Sciatic nerve (tissue), 2 donors: ENCODE measurements at regions of chr7 and their contacts with region 1.

Region 1: DNA sequence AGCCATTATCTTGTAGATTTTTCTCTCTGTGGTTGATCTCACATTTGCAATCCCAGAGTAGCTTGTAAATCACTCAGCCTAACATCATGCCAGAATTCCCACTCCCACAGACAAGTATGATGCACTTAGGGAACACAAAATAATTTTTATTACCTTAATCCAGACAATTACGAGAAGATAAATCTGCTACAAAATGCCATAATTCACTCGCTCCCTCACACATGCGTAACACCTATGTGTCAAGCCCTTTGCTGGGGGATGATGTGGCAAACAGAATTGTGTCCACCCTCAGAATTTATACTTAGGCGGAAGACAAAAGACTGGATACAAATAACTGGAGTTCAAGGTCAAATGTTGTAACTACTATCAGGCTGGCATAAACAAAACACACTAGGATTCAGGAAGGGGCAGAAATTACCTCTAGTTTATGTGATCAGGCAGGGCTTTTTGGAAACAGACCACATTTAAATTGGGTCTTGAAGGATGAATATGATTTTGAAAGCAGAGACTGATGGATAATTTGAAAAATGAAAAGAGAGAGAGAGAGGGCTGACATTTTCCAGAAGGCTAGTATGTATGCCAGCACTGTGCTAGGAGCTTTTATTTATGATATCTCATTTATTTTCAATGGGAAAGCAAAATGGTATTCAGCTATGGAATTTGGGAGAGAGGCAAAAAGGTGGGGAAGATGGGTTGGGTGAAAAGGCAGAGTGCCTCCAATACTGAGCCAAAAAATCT is 69.8 kb downstream of the DOCK4 start:
- DNase-seq: no peak
- ATAC-seq: no peak

Region 2: GRCh38 chr7:112556633-112557032 is 420.2 kb after region 1 on chr7:
- intact Hi-C with region 1: loop called (anchors 5 kb)
- DNase-seq: no peak
- ATAC-seq: no peak